ENCODE measurements at regions of chr1 and their contacts with region 1.

Region 1: GRCh38 chr1:150486964-150487762 is at the start of gene TARS2:
- DNase-seq: peak; percentile 99
- H3K4me3 Mint-ChIP-seq: peak within 1 kb of the TSS; percentile 87
- H3K27ac Mint-ChIP-seq: peak within 1 kb of the TSS; percentile 97
- H3K4me1 Mint-ChIP-seq: peaks cover 21% of the 10 kb centered on the region
- H3K27me3 Mint-ChIP-seq: no peaks in the 10 kb centered on the region
- total RNA-seq, gene TARS2: 68.8 and 77.4 TPM in 2 replicates

Region 2: DNA sequence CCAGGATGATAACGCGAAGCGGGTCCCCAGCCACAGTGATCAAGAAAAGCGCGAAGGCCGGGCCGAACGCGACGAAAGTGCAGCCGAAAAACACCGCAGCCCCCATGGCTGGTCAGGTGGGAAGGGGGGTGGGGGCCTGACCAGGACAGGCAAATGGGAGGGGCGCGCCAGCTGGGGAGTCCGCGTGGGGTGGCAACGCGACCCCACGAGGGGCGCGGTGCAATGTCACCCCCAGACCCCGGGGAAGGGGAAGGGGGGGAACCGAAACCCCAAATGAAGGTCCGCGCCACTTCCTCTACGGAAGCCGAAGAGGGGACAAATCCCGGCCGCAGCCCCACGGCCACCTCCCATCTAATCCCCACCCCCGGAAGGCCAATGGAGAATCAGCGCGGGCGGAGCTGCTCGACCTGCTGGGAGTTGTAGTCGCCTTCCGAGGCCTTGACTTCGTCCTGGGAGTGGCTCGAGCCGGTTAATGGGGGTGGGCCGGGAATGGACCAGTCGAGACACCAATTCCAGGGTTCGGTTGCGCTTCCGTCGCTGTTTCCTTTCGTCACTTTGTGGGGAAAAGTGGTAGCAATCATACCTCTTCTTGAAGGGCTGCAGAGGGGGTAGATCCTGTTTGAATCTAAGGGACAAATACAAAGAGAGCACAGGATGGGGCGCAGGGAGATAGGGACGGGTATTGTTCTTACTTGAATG is 218.3 kb before region 1 on chr1 and contains the start of gene APH1A:
- intact Hi-C with region 1: loop called (anchors 2 kb)
- DNase-seq: peak; percentile 98
- H3K4me3 Mint-ChIP-seq: peak within 1 kb of the TSS; percentile 98
- H3K27ac Mint-ChIP-seq: peak within 1 kb of the TSS; percentile 96
- H3K4me1 Mint-ChIP-seq: peaks cover 31% of the 10 kb centered on the region
- H3K27me3 Mint-ChIP-seq: no peaks in the 10 kb centered on the region
- total RNA-seq, gene APH1A: 101 and 105 TPM in 2 replicates

Region 3: DNA sequence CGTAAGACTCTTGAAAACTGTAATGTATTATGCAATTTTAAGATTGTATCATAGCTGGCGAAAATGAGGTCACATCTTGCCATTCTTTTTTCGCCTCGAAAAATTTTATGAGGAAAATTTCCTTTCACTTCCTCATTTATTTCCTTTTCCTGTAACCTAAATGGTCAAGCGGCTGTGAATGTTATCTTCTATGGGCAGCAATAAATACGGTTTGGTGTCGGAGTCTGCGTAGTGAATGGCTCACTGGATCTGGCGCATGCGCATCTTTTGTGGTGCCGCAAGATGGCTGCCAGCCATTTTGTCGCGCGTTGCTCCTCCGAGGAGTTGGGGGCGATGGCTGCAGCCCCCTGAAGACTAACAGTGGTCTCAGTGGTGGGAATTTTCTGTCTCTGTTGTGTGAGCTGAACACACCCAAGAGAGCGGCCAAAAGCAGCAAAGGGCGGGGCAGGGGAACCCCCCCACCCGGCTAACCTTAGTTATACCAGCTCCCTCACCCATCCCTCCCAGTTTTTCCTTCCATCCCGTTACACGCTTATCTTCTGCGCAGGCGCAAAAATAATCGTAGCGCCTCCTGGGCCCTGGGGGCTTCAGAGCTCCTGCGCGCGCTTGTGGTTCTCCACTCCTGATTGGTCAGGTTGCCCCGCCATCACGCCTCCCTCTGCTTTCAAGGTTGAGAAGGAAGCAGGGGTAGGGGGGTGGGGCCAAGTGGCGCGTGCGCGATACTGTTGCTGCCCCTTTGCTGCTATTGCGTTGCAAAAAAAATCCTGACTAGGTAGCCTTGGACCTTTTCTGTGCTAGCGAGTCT is 123.5 kb before region 1 on chr1 and contains the start of gene RPRD2:
- intact Hi-C with region 1: loop called (anchors 2 kb)
- DNase-seq: peak; percentile 100
- H3K4me3 Mint-ChIP-seq: peak within 1 kb of the TSS; percentile 89
- H3K27ac Mint-ChIP-seq: peak within 1 kb of the TSS; percentile 93
- H3K4me1 Mint-ChIP-seq: peaks cover 25% of the 10 kb centered on the region
- H3K27me3 Mint-ChIP-seq: peaks cover 2% of the 10 kb centered on the region
- total RNA-seq, gene RPRD2: 23.7 and 24.6 TPM in 2 replicates

Region 4: GRCh38 chr1:150515328-150516048 is 28.3 kb after region 1 on chr1 and contains the start of gene FALEC:
- intact Hi-C with region 1: loop called (anchors 1 kb)
- DNase-seq: peak; percentile 98
- H3K4me3 Mint-ChIP-seq: peak within 1 kb of the TSS; percentile 95
- H3K27ac Mint-ChIP-seq: peak within 1 kb of the TSS; percentile 83
- H3K4me1 Mint-ChIP-seq: peaks cover 11% of the 10 kb centered on the region
- H3K27me3 Mint-ChIP-seq: peaks cover 2% of the 10 kb centered on the region
- total RNA-seq, gene FALEC: not detected in 2 replicates

Region 5: GRCh38 chr1:150532868-150533302 is 45.7 kb after region 1 on chr1:
- intact Hi-C with region 1: loop called (anchors 5 kb)
- DNase-seq: no peak
- H3K4me3 Mint-ChIP-seq: no peak overlapping the region
- H3K27ac Mint-ChIP-seq: no peak overlapping the region
- H3K4me1 Mint-ChIP-seq: peaks cover 3% of the 10 kb centered on the region
- H3K27me3 Mint-ChIP-seq: no peaks in the 10 kb centered on the region

Region 6: DNA sequence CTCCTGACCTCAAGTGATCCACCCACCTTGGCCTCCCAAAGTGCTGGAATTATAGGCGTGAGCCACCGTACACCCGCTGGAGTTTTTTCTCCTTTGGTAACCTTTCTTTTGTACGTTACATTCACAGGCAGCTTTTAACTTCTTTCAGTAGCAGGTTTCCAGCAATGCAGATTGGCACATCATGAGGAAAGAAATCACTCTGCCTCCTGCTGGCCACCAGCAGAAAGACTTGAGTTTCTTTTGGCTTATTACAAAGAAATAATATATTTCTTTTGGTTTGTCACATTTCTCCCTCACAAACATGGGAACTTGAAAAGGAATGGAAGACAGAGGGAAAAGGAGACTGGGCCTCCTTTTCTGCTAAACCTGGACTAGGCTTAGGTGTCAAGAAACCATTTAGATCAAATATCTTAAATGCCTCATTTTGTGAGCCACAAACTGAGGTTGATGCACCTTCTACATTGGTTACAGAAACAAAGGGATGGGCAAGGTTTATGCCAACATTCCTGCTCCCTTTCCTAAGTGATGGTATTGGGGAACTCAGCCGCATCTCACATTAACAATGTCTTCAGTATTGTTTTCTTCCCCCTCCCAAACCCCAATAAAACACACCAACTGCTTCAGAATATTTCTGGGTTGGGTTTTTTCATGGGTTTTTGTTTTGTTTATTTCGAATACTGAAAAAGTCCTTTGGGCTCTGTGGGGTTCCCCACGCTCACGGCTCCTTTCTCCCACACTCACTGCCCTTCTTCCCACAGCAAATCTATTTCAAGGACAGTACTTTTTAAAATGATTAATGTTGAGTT is 134.5 kb after region 1 on chr1:
- intact Hi-C with region 1: loop called (anchors 5 kb)
- DNase-seq: peak; percentile 88
- H3K4me3 Mint-ChIP-seq: peak overlapping the region; percentile 67
- H3K27ac Mint-ChIP-seq: peak overlapping the region; percentile 82
- H3K4me1 Mint-ChIP-seq: peaks cover 70% of the 10 kb centered on the region
- H3K27me3 Mint-ChIP-seq: no peaks in the 10 kb centered on the region

Region 7: GRCh38 chr1:150979092-150980056 is 492.2 kb after region 1 on chr1:
- intact Hi-C with region 1: loop called (anchors 10 kb)
- DNase-seq: peak; percentile 97
- H3K4me3 Mint-ChIP-seq: no peak overlapping the region
- H3K27ac Mint-ChIP-seq: peak overlapping the region; percentile 10
- H3K4me1 Mint-ChIP-seq: peaks cover 25% of the 10 kb centered on the region
- H3K27me3 Mint-ChIP-seq: no peaks in the 10 kb centered on the region